IMR-90 (cell line): ENCODE measurements at regions of chr13 and their contacts with region 1.

Region 1: GRCh38 chr13:97934590-97934989 is 18.9 kb upstream of the IPO5 start:
- DNase-seq: no peak
- ATAC-seq: no peak
- H3K4me3 ChIP-seq: no peak overlapping the region
- H3K27ac ChIP-seq: no peak overlapping the region
- H3K4me1 ChIP-seq: no peaks in the 10 kb centered on the region
- H3K27me3 ChIP-seq: no peaks in the 10 kb centered on the region
- CTCF ChIP-seq: no peak
- POLR2A ChIP-seq: no peak
- RAD21 ChIP-seq: no peak

Region 2: DNA sequence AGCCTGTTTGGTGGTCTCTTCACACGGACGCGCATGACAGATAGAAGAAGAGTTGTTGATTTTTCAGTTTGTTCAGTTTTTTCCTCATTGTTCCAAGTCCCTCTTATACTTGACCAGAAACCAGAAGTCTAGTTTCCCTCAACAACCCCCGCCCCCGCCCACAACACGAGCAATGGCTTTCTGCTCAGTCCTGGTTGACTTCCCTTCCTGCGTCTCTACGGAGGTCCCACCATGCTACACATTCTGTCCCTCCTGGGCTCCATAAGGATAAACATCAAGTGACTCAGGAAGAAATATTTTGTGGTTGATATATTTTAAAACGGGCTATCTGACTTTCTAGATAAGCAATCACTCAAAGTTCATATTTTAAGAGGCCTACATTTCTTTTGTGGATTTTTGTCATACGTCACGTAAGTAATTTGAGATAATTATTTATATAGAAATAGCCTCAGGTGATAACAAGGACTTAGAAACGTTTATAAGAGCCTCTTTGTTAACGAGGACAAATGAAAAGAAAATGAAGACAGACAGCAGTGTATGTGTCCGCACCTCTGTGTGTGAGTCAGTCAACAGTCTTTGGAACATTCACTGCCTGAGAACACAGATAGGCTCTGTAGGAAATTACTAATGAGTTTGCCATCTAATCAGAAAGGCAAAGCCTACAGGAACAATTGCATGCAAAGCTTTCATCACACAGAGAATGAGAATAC is 286.3 kb before region 1 on chr13:
- CTCF ChIA-PET with region 1: no interaction called
- POLR2A ChIA-PET with region 1: no interaction called
- dilution Hi-C with region 1: no loop called
- in situ Hi-C with region 1: no loop called
- intact Hi-C with region 1: no loop called
- DNase-seq: no peak
- ATAC-seq: no peak
- H3K4me3 ChIP-seq: no peak overlapping the region
- H3K27ac ChIP-seq: no peak overlapping the region
- H3K4me1 ChIP-seq: no peaks in the 10 kb centered on the region
- H3K27me3 ChIP-seq: peaks cover 1% of the 10 kb centered on the region; the same call in 1 of the 2 replicates
- CTCF ChIP-seq: no peak
- POLR2A ChIP-seq: no peak
- RAD21 ChIP-seq: no peak

Region 3: DNA sequence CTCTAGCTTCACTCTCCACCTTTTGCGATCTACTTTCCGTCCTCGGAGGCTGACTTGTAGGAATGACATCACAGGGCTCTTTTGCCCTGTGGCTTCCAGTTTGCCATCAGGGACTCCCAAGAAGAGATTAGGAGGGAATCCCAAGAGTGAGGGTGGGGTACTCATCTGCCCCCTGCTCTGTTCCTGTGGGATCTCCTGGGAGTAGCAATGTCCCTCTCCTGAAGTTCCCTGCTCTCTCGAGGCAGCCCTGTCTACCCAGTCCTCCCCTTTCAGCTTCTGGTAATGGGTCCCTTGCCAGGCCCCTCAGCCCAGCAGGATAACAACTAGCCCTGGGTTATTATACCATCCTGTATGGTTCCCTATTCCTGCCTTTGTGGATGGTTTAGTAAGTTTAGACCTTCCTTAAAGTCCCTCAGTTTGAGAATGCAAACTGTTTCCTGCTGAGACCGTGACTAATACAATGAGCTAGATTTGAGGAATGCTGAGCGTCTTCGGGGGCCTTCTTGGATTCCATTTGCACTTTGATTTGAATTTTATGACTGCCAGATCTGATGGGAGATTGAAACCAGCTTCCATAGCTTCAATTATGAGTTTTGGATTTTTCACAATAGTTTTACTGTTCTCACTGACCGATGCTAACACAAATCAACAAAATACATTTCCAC is 54.8 kb before region 1 on chr13:
- CTCF ChIA-PET with region 1: no interaction called
- POLR2A ChIA-PET with region 1: no interaction called
- dilution Hi-C with region 1: no loop called
- in situ Hi-C with region 1: no loop called
- intact Hi-C with region 1: no loop called
- DNase-seq: peak; percentile 91
- ATAC-seq: peak; percentile 90
- H3K4me3 ChIP-seq: no peak overlapping the region
- H3K27ac ChIP-seq: peak overlapping the region; percentile 98
- H3K4me1 ChIP-seq: peaks cover 18% of the 10 kb centered on the region
- H3K27me3 ChIP-seq: no peaks in the 10 kb centered on the region
- CTCF ChIP-seq: no peak
- POLR2A ChIP-seq: no peak
- RAD21 ChIP-seq: no peak; the same call in 1 of the 2 replicates

Region 4: GRCh38 chr13:97896446-97896845 is 38.1 kb before region 1 on chr13:
- CTCF ChIA-PET with region 1: no interaction called
- POLR2A ChIA-PET with region 1: no interaction called
- dilution Hi-C with region 1: no loop called
- in situ Hi-C with region 1: no loop called
- intact Hi-C with region 1: loop called (anchors 5 kb)
- DNase-seq: no peak
- ATAC-seq: no peak
- H3K4me3 ChIP-seq: no peak overlapping the region
- H3K27ac ChIP-seq: no peak overlapping the region
- H3K4me1 ChIP-seq: peaks cover 3% of the 10 kb centered on the region
- H3K27me3 ChIP-seq: no peaks in the 10 kb centered on the region
- CTCF ChIP-seq: no peak
- POLR2A ChIP-seq: no peak
- RAD21 ChIP-seq: no peak